Activated CD8-positive, alpha-beta T cell treated with anti-CD3 and anti-CD28 coated beads, Interleukin-2, amount 10 ng/mL, durations not matched to agents 7 days and 5 days (primary cell): ENCODE measurements at regions of chr16 and their contacts with region 1.

Region 1: DNA sequence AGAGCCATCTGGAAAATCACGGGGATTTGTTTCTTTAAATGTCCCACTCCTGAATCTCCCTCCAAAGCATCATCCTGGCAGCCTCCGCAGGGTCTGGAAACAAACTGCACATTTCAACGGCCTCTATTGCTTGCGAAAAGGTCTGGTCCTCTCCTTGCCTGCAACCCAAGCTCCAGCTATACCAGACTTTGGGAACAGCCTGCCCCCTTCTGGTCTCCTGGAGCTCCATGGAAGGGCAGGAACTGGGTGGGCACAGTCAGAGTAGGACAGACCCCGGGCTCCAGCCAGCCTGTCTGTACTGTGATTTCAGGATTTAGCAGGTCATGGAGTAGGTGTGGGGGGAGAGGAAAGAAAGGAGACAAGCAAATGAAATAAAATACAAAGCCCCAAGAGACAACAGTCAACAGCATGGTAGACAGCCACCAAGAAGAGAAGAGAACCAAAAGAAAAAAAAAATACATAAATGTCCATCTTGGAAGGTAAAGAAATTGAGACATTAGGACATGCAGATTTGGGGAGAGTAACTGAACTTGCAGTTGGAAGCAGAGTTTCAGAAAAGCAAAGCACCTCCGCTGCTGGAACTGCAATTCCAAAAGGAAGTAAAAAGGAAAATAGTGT is 2.7 kb downstream of the XYLT1 start:
- DNase-seq: peak; percentile 64
- ATAC-seq: peak; percentile 26
- H3K4me3 Mint-ChIP-seq: peak overlapping the region; percentile 90
- H3K27ac Mint-ChIP-seq: peak overlapping the region; percentile 56
- H3K4me1 Mint-ChIP-seq: peaks cover 46% of the 10 kb centered on the region
- H3K27me3 Mint-ChIP-seq: no peaks in the 10 kb centered on the region

Region 2: GRCh38 chr16:17194190-17194780 is 273.7 kb before region 1 on chr16:
- CTCF ChIA-PET with region 1: interaction called, 14 read pairs
- POLR2A ChIA-PET with region 1: no interaction called
- DNase-seq: peak; percentile 62
- ATAC-seq: peak; percentile 63
- H3K4me3 Mint-ChIP-seq: no peak overlapping the region
- H3K27ac Mint-ChIP-seq: no peak overlapping the region
- H3K4me1 Mint-ChIP-seq: peaks cover 9% of the 10 kb centered on the region
- H3K27me3 Mint-ChIP-seq: no peaks in the 10 kb centered on the region

Region 3: DNA sequence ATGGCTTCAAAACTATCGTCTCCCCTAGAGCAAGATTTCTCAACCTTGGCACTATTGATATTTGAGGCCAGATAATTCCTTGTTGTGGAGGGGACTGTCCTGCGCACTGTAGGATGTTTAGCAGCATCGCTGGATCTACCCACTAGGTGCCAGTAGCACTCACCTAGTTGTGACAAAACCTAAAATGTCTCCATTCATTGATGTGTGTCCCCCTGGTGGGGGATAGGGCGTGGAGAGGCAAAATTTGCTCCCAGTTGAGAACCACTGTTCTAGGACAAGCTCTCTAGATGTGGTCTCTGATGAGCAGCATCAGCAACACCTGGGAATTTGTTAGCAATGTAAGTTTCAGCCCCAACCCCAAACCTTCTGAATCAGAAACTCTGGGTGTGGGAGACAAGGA is 256.2 kb before region 1 on chr16:
- CTCF ChIA-PET with region 1: interaction called, 10 read pairs
- POLR2A ChIA-PET with region 1: no interaction called
- DNase-seq: peak; percentile 66
- ATAC-seq: peak; percentile 71
- H3K4me3 Mint-ChIP-seq: no peak overlapping the region
- H3K27ac Mint-ChIP-seq: peak overlapping the region; percentile 19
- H3K4me1 Mint-ChIP-seq: peaks cover 38% of the 10 kb centered on the region
- H3K27me3 Mint-ChIP-seq: no peaks in the 10 kb centered on the region

Region 4: GRCh38 chr16:17343028-17343427 is 125.0 kb before region 1 on chr16:
- CTCF ChIA-PET with region 1: interaction called, 10 read pairs
- POLR2A ChIA-PET with region 1: interaction called, 6 read pairs
- DNase-seq: peak; percentile 83
- ATAC-seq: peak; percentile 64
- H3K4me3 Mint-ChIP-seq: peak overlapping the region; percentile 74
- H3K27ac Mint-ChIP-seq: peak overlapping the region; percentile 94
- H3K4me1 Mint-ChIP-seq: peaks cover 94% of the 10 kb centered on the region
- H3K27me3 Mint-ChIP-seq: no peaks in the 10 kb centered on the region

Region 5: GRCh38 chr16:17364319-17365210 is 103.5 kb before region 1 on chr16:
- CTCF ChIA-PET with region 1: interaction called, 25 read pairs
- POLR2A ChIA-PET with region 1: interaction called, 17 read pairs
- DNase-seq: peak; percentile 78
- ATAC-seq: peak; percentile 76
- H3K4me3 Mint-ChIP-seq: peak overlapping the region; percentile 38
- H3K27ac Mint-ChIP-seq: peak overlapping the region; percentile 85
- H3K4me1 Mint-ChIP-seq: peaks cover 98% of the 10 kb centered on the region
- H3K27me3 Mint-ChIP-seq: no peaks in the 10 kb centered on the region

Region 6: DNA sequence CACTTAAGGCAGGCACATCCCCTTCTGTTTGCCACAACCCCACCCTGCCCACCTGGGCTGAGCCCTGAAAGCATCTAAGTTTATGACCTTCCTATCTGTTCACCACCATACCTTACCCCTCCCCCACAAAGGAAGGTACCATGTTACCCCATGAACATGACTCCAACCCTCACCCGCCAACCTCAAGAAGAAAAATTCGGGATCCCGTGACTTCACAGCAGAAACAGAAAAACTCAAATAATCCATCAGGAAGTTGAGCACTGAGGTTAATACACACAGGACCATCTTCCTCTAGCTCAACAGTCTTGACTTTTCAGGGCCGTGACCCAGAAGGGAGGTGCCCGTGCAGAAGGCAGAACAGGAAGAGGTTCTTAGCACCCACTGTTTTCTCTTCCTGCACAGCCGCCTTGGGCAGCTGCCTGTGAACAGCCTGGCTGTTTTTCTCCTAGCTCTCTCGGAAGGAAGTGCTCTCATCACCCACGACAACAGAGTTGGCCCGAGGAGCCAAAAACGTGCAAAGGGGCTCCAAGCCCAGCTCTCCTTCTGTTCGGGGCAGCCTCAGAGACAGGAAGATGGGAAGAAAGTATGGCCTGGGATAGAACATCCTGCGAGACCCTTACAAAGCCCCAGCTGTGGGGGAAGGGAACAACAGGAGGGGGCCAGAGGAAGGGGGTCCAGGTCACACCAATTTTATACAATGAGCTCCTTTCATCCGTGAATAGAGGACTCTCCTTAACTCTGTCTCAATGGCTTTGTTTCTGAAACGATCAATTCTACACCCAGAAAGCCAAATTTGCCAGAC is 98.4 kb before region 1 on chr16:
- CTCF ChIA-PET with region 1: interaction called, 25 read pairs
- POLR2A ChIA-PET with region 1: interaction called, 17 read pairs
- DNase-seq: peak; percentile 88
- ATAC-seq: peak; percentile 85
- H3K4me3 Mint-ChIP-seq: peak overlapping the region; percentile 80
- H3K27ac Mint-ChIP-seq: peak overlapping the region; percentile 99
- H3K4me1 Mint-ChIP-seq: peaks cover 93% of the 10 kb centered on the region
- H3K27me3 Mint-ChIP-seq: no peaks in the 10 kb centered on the region